ENCODE measurements at regions of chr1 and their contacts with region 1.

Region 1: DNA sequence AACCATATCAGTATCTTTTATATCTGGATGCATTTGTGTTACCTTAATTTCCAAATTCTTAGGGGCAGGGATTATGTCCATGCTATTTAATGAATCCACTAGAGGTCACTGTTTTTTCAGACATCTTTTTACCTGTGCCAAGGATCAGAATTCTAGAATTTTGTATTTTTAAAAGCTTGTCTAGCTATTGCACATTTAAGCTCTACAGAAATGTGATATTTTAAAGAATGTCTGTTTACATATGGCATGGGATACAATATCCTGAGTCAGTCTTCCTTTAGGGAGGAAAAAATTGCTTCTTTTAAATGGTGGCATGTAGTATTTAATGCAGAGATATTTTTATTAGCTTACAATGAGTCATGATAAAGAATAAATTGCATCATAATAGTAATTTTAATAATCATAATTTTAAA is 11.3 kb downstream of the RPAP2 start:
- DNase-seq: no peak
- ATAC-seq: peak; percentile 74
- H3K4me3 ChIP-seq: no peak overlapping the region
- H3K27ac ChIP-seq: no peak overlapping the region
- H3K4me1 ChIP-seq: peaks cover 3% of the 10 kb centered on the region; the same call in 1 of the 2 replicates
- H3K27me3 ChIP-seq: no peaks in the 10 kb centered on the region
- CTCF ChIP-seq: peak; percentile 42 to 62 (median 44); a peak in 5 of 6 replicates
- EP300 ChIP-seq: no peak
- POLR2A ChIP-seq: no peak
- RAD21 ChIP-seq: peak; percentile 76

Region 2: GRCh38 chr1:92123868-92124267 is 186.3 kb before region 1 on chr1:
- CTCF ChIA-PET with region 1: no interaction called
- POLR2A ChIA-PET with region 1: no interaction called
- RAD21 ChIA-PET with region 1: no interaction called
- SMC1A ChIA-PET with region 1: no interaction called
- in situ Hi-C with region 1: no loop called
- intact Hi-C with region 1: no loop called
- DNase-seq: no peak
- ATAC-seq: no peak
- H3K4me3 ChIP-seq: no peak overlapping the region
- H3K27ac ChIP-seq: no peak overlapping the region
- H3K4me1 ChIP-seq: no peaks in the 10 kb centered on the region
- H3K27me3 ChIP-seq: no peaks in the 10 kb centered on the region
- CTCF ChIP-seq: no peak
- EP300 ChIP-seq: no peak
- POLR2A ChIP-seq: no peak
- RAD21 ChIP-seq: no peak

Region 3: GRCh38 chr1:92461364-92462097 is 151.3 kb after region 1 on chr1:
- CTCF ChIA-PET with region 1: interaction called, 7 read pairs
- POLR2A ChIA-PET with region 1: no interaction called
- RAD21 ChIA-PET with region 1: interaction called, 3 read pairs
- SMC1A ChIA-PET with region 1: interaction called, 12 read pairs
- in situ Hi-C with region 1: no loop called
- intact Hi-C with region 1: loop called (anchors 5 kb)
- DNase-seq: no peak
- ATAC-seq: peak; percentile 87
- H3K4me3 ChIP-seq: no peak overlapping the region
- H3K27ac ChIP-seq: no peak overlapping the region
- H3K4me1 ChIP-seq: peaks cover 17% of the 10 kb centered on the region
- H3K27me3 ChIP-seq: no peaks in the 10 kb centered on the region
- CTCF ChIP-seq: peak in 2 of 3 experiments; percentile 23 to 41; a peak in 3 of 6 replicates
- EP300 ChIP-seq: 0 out of 4 replicates have a peak, but pooled peaks of 1 of the 2 experiments have one; percentile 42
- POLR2A ChIP-seq: no peak
- RAD21 ChIP-seq: peak; percentile 67

Region 4: DNA sequence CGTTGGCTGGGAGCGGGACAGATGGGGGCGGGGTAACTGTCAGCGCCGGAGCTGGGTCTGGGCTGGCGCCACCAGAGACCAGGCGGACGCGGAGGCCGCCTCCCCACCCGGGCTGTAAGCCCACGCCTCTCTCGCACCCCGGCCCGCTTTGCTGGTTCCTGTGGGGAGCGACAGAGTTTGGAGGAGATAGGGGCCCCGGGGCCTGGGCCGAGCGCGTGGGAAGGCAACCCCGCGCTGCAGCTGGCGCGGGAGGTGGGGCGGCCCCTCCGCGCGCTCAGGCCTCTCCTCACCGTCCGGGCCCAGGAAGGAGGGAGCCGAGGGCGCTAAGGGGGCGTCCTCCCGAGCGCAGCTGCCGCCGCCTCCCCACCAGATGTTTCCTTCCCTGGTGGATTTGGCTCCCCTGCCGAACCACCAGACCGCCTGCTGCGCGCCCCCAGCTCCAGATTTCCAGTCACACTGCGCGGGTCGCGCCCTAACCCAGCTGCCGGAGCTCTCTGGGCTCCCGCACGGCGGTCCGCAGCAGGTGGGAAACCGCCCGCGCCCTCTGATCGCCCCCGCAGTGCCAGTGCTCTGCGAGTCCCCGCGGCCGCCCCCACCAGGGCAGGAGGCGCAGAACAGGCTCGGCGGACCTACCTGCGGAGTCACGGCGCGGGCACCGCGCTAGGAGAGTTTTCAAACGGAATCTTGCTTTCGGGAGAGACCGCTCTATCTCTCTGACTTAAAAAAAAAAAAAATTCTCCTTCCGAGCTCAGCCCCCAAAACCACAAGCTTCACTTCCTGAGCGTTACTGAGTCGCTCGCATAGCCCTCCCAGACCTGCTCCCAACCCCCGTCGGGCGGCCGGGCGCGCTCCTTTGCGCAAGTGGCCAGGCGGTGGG is 175.4 kb after region 1 on chr1:
- CTCF ChIA-PET with region 1: interaction called, 20 read pairs
- POLR2A ChIA-PET with region 1: interaction called, 5 read pairs
- RAD21 ChIA-PET with region 1: interaction called, 20 read pairs
- SMC1A ChIA-PET with region 1: interaction called, 13 read pairs
- in situ Hi-C with region 1: no loop called
- intact Hi-C with region 1: loop called (anchors 5 kb)
- DNase-seq: no peak
- ATAC-seq: peak; percentile 63
- H3K4me3 ChIP-seq: peak overlapping the region; percentile 93
- H3K27ac ChIP-seq: peak overlapping the region; percentile 77
- H3K4me1 ChIP-seq: peaks cover 6% of the 10 kb centered on the region
- H3K27me3 ChIP-seq: no peaks in the 10 kb centered on the region
- CTCF ChIP-seq: peak; percentile 55 to 69 (median 56)
- EP300 ChIP-seq: no peak
- POLR2A ChIP-seq: peak; percentile 74
- RAD21 ChIP-seq: peak; percentile 45

Region 5: DNA sequence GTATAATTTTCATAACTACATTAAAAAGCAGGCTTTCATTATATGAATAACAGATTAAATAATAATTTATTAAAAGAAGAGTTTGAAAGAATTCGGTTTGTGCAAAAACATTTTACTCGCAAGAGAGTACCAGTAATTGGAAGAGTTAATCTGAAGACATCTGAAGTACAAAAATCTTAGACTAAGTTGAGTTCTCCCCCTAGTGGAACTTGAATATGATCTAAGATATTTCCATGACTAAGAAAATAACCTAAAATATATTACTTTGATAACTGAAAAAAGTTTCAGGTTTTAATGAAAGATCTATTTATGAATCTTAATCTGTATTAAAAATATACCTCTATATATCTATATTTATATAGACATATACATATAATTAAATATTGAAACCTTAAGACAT is 289.0 kb after region 1 on chr1:
- CTCF ChIA-PET with region 1: interaction called, 48 read pairs
- POLR2A ChIA-PET with region 1: no interaction called
- RAD21 ChIA-PET with region 1: interaction called, 18 read pairs
- SMC1A ChIA-PET with region 1: interaction called, 42 read pairs
- in situ Hi-C with region 1: loop called (anchors 5 kb)
- intact Hi-C with region 1: loop called (anchors 1 kb)
- DNase-seq: no peak
- ATAC-seq: peak; percentile 76
- H3K4me3 ChIP-seq: no peak overlapping the region
- H3K27ac ChIP-seq: no peak overlapping the region
- H3K4me1 ChIP-seq: no peaks in the 10 kb centered on the region
- H3K27me3 ChIP-seq: no peaks in the 10 kb centered on the region
- CTCF ChIP-seq: peak; percentile 21 to 55 (median 25); a peak in 3 of 6 replicates
- EP300 ChIP-seq: no peak
- POLR2A ChIP-seq: no peak
- RAD21 ChIP-seq: peak; percentile 82

Region 6: GRCh38 chr1:92817986-92818764 is 508.0 kb after region 1 on chr1:
- CTCF ChIA-PET with region 1: interaction called, 5 read pairs
- POLR2A ChIA-PET with region 1: no interaction called
- RAD21 ChIA-PET with region 1: no interaction called
- SMC1A ChIA-PET with region 1: interaction called, 3 read pairs
- in situ Hi-C with region 1: no loop called
- intact Hi-C with region 1: loop called (anchors 10 kb)
- DNase-seq: no peak
- ATAC-seq: peak; percentile 90
- H3K4me3 ChIP-seq: no peak overlapping the region
- H3K27ac ChIP-seq: no peak overlapping the region
- H3K4me1 ChIP-seq: no peaks in the 10 kb centered on the region
- H3K27me3 ChIP-seq: no peaks in the 10 kb centered on the region
- CTCF ChIP-seq: peak; percentile 62 to 86 (median 77)
- EP300 ChIP-seq: no peak
- POLR2A ChIP-seq: no peak
- RAD21 ChIP-seq: peak; percentile 73

Region 7: GRCh38 chr1:93164816-93165215 is 854.6 kb after region 1 on chr1:
- CTCF ChIA-PET with region 1: no interaction called
- POLR2A ChIA-PET with region 1: no interaction called
- RAD21 ChIA-PET with region 1: no interaction called
- SMC1A ChIA-PET with region 1: no interaction called
- in situ Hi-C with region 1: no loop called
- intact Hi-C with region 1: no loop called
- DNase-seq: no peak
- ATAC-seq: no peak
- H3K4me3 ChIP-seq: no peak overlapping the region
- H3K27ac ChIP-seq: no peak overlapping the region
- H3K4me1 ChIP-seq: no peaks in the 10 kb centered on the region
- H3K27me3 ChIP-seq: no peaks in the 10 kb centered on the region
- CTCF ChIP-seq: no peak
- EP300 ChIP-seq: no peak
- POLR2A ChIP-seq: no peak
- RAD21 ChIP-seq: no peak

Measured in GM12878 (cell line).